ENCODE measurements at regions of chr1 and their contacts with region 1.

Region 1: GRCh38 chr1:88877382-88877825 is 14.0 kb downstream of the GTF2B start:
- DNase-seq: no peak
- ATAC-seq: no peak
- H3K4me3 ChIP-seq: no peak overlapping the region
- H3K27ac ChIP-seq: no peak overlapping the region
- H3K4me1 ChIP-seq: peaks cover 0 to 51% (median 37%) of the 10 kb centered on the region in 9 donors
- H3K27me3 ChIP-seq: no peaks in the 10 kb centered on the region
- CTCF ChIP-seq: peak; percentile 21 to 76 (median 59)

Region 2: DNA sequence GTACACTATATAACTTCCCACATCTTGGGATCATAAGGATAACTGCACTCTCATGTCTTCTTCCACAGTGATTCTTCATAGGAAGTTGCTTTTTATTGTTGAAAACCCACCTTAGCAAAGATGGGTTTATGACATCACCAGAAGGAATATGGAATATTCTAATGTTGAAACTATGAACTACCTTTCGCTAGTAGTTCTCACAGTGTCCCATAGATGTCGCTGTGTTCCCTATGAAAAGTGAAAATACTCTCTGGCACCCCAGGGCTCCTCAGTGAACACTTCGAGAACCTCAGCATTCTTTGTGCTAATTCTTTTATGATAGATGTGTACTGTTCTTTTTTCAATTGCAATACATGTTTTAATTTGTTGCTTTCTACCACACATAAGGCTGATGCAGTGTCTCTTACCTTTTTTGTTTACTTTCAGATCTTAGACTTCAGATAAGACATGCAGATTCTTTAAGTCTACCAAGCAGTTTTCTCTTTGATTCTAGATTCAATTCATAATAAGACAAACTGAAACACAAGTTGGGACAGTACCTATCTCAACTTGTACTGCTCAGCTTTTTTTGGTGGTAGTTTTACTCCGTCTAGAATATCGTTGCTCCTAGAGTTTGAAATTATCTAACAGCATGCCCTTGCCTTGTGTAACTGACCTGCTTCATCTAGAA is 76.9 kb before region 1 on chr1:
- intact Hi-C with region 1: loop called in 1 of 10 experiments (anchors 5 kb)
- DNase-seq: no peak
- ATAC-seq: peak in 1 of 8 donors; percentile 51
- H3K4me3 ChIP-seq: no peak overlapping the region
- H3K27ac ChIP-seq: no peak overlapping the region
- H3K4me1 ChIP-seq: peaks cover 0 to 14% (median 0%) of the 10 kb centered on the region in 9 donors
- H3K27me3 ChIP-seq: no peaks in the 10 kb centered on the region
- CTCF ChIP-seq: peak; percentile 24 to 74 (median 60)

Measured in heart right ventricle (tissue), 16 donors.